ENCODE measurements at regions of chr11 and their contacts with region 1.

Region 1: GRCh38 chr11:100247704-100248103 is 439.4 kb upstream of the ARHGAP42 start:
- DNase-seq: no peak
- H3K4me3 ChIP-seq: no peak overlapping the region
- H3K27ac ChIP-seq: no peak overlapping the region
- H3K4me1 ChIP-seq: no peaks in the 10 kb centered on the region
- H3K27me3 ChIP-seq: no peaks in the 10 kb centered on the region
- CTCF ChIP-seq: no peak
- POLR2A ChIP-seq: no peak

Region 2: DNA sequence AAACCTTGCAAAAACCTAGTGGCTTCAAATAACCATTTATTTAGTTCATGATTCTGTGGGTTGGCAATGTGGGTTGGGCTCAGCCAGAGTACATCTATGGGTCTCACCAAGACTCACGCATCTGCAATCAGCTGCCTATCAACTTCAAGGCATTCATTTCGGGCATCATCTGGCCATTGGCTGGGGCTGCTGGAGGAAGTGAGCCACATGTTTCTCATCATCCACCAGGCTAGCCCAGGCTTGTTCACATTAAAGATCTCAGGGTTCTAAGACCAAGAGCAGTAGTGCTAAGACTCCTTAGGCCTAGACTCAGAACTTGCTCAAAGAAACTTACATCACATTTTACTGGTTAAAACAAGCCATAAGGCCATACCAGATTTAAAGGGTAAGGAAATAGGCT is 39.5 kb before region 1 on chr11:
- intact Hi-C with region 1: loop called (anchors 2 kb)
- DNase-seq: no peak
- H3K4me3 ChIP-seq: no peak overlapping the region
- H3K27ac ChIP-seq: no peak overlapping the region
- H3K4me1 ChIP-seq: no peaks in the 10 kb centered on the region
- H3K27me3 ChIP-seq: no peaks in the 10 kb centered on the region
- CTCF ChIP-seq: no peak
- POLR2A ChIP-seq: no peak